GM10248 (cell line): ENCODE measurements at regions of chr2 and their contacts with region 1.

Region 1: GRCh38 chr2:195318440-195319111 is 338.4 kb upstream of the SLC39A10 start:
- DNase-seq: peak; percentile 26
- CTCF ChIP-seq: peak; percentile 45

Region 2: GRCh38 chr2:195333869-195334268 is 15.3 kb after region 1 on chr2:
- CTCF ChIA-PET with region 1: interaction called, 10 read pairs
- POLR2A ChIA-PET with region 1: no interaction called
- DNase-seq: no peak
- CTCF ChIP-seq: no peak